MCF 10A (cell line): ENCODE measurements at regions of chr5 and their contacts with region 1.

Region 1: GRCh38 chr5:143403593-143404415 is at the start of gene NR3C1:
- DNase-seq: peak; percentile 86
- H3K4me3 Mint-ChIP-seq: peak within 1 kb of the TSS; percentile 98
- H3K27ac Mint-ChIP-seq: peak within 1 kb of the TSS; percentile 99
- H3K4me1 Mint-ChIP-seq: peaks cover 29% of the 10 kb centered on the region
- H3K27me3 Mint-ChIP-seq: no peaks in the 10 kb centered on the region
- CTCF ChIP-seq: peak; percentile 59
- total RNA-seq, gene NR3C1: 92.9 and 113 TPM in 2 replicates

Region 2: DNA sequence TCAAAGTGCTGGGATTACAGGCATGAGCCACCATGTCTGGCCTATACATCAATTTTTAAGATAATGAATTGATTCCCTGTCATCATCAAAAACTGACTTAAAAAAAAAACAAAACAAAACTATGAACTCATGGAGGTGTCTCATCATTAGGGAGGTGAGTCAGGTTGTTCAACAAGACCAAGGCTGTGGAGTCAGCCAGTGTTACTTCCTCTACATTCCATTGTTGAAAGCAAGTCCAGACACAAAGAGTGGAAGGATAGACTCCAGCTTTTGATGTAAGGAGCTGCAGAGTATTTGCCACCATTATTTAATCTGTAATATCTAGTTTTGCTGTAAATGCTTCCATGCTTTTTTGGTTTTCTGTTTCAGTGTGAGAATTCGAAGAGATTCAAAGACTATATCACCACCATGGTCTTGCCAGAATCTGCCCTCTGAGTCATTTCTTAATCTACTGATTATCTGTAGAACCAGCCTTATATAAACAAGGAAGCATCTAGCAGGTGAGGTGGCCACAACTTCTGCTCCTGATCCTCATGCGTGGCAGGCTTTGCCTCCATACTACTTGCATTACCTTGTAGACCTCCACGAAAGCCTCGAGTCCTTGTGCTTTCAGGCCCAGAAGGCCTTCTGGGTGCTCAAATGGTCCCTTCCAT is 874.1 kb before region 1 on chr5:
- CTCF ChIA-PET with region 1: no interaction called
- POLR2A ChIA-PET with region 1: no interaction called
- intact Hi-C with region 1: no loop called
- DNase-seq: peak; percentile 86
- H3K4me3 Mint-ChIP-seq: no peak overlapping the region
- H3K27ac Mint-ChIP-seq: peak overlapping the region; percentile 72
- H3K4me1 Mint-ChIP-seq: peaks cover 21% of the 10 kb centered on the region
- H3K27me3 Mint-ChIP-seq: no peaks in the 10 kb centered on the region
- CTCF ChIP-seq: no peak

Region 3: DNA sequence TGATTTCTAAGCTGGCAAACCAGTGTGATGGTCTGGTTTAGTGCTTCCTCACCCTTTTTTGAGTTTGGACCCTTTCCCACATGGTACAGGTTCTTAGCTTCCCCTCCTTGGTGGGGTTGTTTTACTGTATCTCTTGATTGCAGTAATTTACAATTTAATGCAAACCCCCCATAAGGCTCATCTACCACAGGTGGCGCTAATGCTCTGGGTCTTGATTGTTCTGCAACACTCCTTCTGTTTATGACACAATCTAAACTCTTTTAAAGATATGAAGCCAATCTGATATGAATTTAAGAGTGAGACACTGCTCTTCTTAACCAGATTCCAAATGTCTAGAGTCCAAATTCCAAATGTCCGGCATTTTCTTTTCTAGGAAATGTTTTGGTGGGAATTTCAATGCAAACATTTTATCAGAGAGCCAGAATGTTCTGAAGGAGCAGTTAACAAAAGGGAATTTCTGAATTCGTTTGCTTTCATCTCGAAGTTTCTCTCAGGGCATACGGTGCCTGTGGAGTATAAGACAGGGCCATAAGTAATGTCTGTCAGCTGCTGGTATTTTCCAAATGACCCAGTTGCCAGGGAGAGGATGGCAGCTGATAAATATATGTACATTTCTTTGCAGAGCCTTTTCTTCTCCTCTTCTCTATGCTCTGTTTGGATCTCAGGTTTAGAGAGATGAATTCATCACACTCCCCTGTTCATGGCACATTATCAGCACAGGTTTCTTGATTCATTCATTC is 386.9 kb before region 1 on chr5:
- CTCF ChIA-PET with region 1: interaction called, 4 read pairs
- POLR2A ChIA-PET with region 1: interaction called, 4 read pairs
- intact Hi-C with region 1: loop called (anchors 1 kb)
- DNase-seq: peak; percentile 85
- H3K4me3 Mint-ChIP-seq: no peak overlapping the region
- H3K27ac Mint-ChIP-seq: no peak overlapping the region
- H3K4me1 Mint-ChIP-seq: peaks cover under 1% of the 10 kb centered on the region
- H3K27me3 Mint-ChIP-seq: no peaks in the 10 kb centered on the region
- CTCF ChIP-seq: peak; percentile 83

Region 4: DNA sequence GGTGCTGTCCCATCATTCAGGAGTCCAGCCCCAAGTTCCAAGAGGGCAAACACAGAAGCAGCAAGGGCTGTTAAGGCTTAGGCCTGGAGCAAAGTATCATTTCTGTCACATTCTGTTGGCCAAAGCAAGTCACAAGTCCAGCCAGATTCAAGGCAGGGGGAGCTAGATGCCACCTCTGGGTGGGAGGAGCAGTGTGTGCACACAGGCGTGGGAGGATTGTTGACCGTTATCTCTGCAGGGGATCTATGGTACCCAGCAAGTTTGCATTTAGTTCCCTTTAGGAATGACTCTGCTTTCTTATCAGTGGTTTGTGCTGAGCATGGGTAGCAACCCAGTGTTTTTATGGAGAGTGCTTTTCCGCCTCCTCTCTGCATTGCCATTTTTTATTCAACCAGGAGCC is 279.2 kb before region 1 on chr5:
- CTCF ChIA-PET with region 1: no interaction called
- POLR2A ChIA-PET with region 1: no interaction called
- intact Hi-C with region 1: no loop called
- DNase-seq: no peak
- H3K4me3 Mint-ChIP-seq: no peak overlapping the region
- H3K27ac Mint-ChIP-seq: no peak overlapping the region
- H3K4me1 Mint-ChIP-seq: no peaks in the 10 kb centered on the region
- H3K27me3 Mint-ChIP-seq: no peaks in the 10 kb centered on the region
- CTCF ChIP-seq: no peak

Region 5: DNA sequence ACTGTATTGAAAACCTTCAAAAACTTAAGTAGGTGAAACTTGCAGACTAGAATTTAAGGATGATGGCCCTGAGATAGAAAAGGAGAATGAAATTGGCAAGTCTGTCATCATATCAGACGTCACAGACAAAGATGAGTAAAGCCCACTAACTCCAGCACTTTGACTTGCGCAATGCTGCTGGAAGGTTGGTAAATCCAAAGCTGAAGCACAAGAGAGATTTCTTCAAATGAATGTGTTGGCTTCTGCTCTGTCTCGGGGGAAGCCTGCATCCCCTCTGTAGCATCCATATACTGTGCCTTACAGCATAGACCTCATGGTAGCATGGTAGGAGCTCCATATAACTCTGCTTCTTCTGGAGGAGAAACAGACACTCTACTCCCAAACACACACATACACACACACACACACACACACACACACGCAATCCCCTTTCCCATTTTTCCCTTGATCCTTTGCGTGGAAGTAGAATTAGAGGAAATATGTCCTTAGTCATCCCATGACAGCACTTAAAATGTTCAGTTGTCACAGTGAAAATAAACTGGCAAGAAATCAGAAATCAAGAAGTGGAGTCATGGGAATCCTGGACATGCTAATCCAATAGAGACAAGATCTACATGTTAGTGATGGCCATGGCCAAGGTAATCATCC is 241.8 kb before region 1 on chr5:
- CTCF ChIA-PET with region 1: interaction called, 6 read pairs
- POLR2A ChIA-PET with region 1: interaction called, 5 read pairs
- intact Hi-C with region 1: loop called (anchors 5 kb)
- DNase-seq: peak; percentile 96
- H3K4me3 Mint-ChIP-seq: no peak overlapping the region
- H3K27ac Mint-ChIP-seq: peak overlapping the region; percentile 25
- H3K4me1 Mint-ChIP-seq: peaks cover 38% of the 10 kb centered on the region
- H3K27me3 Mint-ChIP-seq: no peaks in the 10 kb centered on the region
- CTCF ChIP-seq: no peak

Region 6: GRCh38 chr5:143314659-143315058 is 89.1 kb before region 1 on chr5:
- CTCF ChIA-PET with region 1: interaction called, 5 read pairs
- POLR2A ChIA-PET with region 1: interaction called, 29 read pairs
- intact Hi-C with region 1: loop called (anchors 2 kb)
- DNase-seq: peak; percentile 68
- H3K4me3 Mint-ChIP-seq: no peak overlapping the region
- H3K27ac Mint-ChIP-seq: peak overlapping the region; percentile 73
- H3K4me1 Mint-ChIP-seq: peaks cover 69% of the 10 kb centered on the region
- H3K27me3 Mint-ChIP-seq: no peaks in the 10 kb centered on the region
- CTCF ChIP-seq: no peak

Region 7: DNA sequence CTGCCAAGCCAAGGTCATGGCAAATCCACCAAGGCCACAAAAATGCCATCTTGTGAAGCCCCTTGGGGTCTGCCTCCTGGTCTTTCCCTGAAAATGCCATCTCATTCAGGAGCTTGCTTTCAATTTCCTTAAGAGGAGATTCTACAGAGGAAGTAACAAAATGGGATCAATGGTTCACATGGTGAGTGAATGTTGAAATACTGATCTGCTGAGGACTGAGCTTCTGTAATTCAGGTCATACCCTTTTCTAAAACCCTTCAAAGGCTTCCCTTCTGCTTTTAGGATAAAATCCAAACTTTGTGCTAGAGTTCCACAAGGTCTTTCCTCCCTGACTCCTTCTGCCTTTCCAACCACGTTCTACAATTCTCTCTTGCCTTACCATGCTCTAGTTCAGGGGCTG is 24.4 kb after region 1 on chr5:
- CTCF ChIA-PET with region 1: no interaction called
- POLR2A ChIA-PET with region 1: no interaction called
- intact Hi-C with region 1: no loop called
- DNase-seq: no peak
- H3K4me3 Mint-ChIP-seq: no peak overlapping the region
- H3K27ac Mint-ChIP-seq: no peak overlapping the region
- H3K4me1 Mint-ChIP-seq: no peaks in the 10 kb centered on the region
- H3K27me3 Mint-ChIP-seq: no peaks in the 10 kb centered on the region
- CTCF ChIP-seq: no peak

Region 8: DNA sequence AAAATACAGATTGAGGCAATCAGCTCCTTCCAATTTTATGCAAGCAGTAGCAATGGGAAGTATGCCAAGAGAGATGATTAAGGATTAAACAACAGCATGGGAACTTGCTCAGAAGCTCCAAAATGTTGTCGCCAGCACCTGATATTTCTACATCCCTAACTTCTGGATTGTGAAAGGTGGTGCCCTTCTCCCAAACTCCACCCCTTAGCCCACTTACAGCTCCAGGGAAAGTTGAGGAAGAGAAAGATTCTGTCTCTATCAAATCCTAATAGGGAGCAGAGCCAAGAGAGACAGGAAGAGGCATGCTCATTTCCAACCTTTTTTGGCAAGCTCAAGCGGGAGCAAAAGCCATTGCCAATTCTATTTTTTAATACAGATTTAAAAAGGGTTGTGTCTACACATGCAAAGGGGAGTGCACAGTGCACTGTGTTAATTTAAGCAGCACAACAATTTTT is 92.0 kb after region 1 on chr5:
- CTCF ChIA-PET with region 1: interaction called, 10 read pairs
- POLR2A ChIA-PET with region 1: interaction called, 108 read pairs
- intact Hi-C with region 1: no loop called
- DNase-seq: peak; percentile 100
- H3K4me3 Mint-ChIP-seq: peak overlapping the region; percentile 45
- H3K27ac Mint-ChIP-seq: peak overlapping the region; percentile 82
- H3K4me1 Mint-ChIP-seq: peaks cover 46% of the 10 kb centered on the region
- H3K27me3 Mint-ChIP-seq: no peaks in the 10 kb centered on the region
- CTCF ChIP-seq: no peak

Region 9: GRCh38 chr5:143699121-143699520 is 295.3 kb after region 1 on chr5:
- CTCF ChIA-PET with region 1: no interaction called
- POLR2A ChIA-PET with region 1: no interaction called
- intact Hi-C with region 1: no loop called
- DNase-seq: no peak
- H3K4me3 Mint-ChIP-seq: no peak overlapping the region
- H3K27ac Mint-ChIP-seq: no peak overlapping the region
- H3K4me1 Mint-ChIP-seq: no peaks in the 10 kb centered on the region
- H3K27me3 Mint-ChIP-seq: no peaks in the 10 kb centered on the region
- CTCF ChIP-seq: no peak

Region 10: DNA sequence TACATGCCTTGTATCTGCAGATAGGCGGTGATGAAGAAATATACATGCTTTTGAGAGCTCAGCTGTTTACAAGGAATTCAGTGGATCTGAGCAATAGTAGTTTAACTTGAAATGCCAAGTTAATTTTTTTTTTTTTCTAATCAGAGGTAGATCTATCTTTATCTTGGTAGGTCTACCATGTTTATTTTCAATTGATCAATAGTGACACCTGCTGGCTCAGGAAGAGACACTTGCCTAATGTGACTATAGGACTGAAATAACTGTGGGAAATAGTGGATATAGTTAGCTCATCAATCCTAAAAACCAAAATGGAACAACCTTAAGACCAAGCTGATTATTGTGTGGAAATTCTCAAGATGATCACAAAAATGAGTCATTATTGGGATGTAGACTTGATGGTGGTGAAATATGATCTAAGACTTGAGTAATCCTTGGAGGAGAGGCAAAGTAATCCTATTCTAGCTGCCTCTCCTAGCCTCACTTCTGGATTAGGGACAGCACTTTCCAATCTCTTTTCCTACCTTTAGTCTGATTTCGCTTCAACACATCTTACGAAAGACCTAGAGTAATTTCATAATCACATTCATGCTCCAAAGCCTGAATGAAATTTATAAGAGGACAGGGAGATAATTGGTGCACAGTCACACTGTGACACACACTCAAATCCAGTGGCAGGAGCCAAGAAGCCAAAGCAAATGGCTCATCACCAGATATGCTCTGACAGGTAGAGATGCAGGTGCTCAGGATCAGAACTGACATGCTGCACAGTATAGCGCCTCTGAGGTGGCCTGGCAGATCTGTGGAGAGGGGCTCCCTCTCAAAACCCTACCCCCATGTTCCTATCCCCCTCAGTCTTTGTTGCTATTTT is 564.4 kb after region 1 on chr5:
- CTCF ChIA-PET with region 1: interaction called, 11 read pairs
- POLR2A ChIA-PET with region 1: interaction called, 5 read pairs
- intact Hi-C with region 1: loop called (anchors 1 kb)
- DNase-seq: peak; percentile 80
- H3K4me3 Mint-ChIP-seq: no peak overlapping the region
- H3K27ac Mint-ChIP-seq: no peak overlapping the region
- H3K4me1 Mint-ChIP-seq: peaks cover 24% of the 10 kb centered on the region
- H3K27me3 Mint-ChIP-seq: no peaks in the 10 kb centered on the region
- CTCF ChIP-seq: peak; percentile 76